Left ventricle myocardium superior (tissue), 1 donor: ENCODE measurements at regions of chr15 and their contacts with region 1.

Region 1: DNA sequence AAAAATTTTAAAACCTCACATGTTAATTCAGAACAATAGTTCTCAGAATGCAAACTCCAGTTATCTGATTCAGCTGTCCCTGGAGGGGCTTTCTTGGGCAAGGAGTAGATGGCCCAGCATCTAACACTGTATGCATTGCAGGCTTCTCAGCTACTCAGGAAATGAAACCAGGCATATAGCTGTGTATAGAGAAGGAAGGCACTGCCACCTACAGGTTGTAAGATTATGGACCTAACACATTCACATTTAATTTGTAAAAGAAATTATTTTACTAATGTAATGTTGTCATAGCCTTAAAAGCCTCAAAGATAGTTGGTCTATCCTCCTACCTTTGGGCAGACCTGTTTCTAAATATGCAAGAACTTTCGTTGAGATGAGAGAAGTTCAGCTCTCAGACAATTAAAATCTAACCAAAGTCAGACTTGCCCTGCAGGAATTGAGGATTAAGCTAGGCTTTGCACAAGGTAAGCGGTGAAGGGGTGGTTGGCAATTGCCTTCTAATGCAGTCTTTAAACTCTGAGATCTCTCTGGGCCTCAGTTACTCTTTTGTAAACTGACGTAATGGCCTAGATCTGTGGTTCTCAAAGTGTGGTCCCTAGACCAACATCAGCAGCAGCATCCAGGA is 132.8 kb upstream of the SLC24A5 start:
- DNase-seq: no peak
- ATAC-seq: peak; percentile 87

Region 2: DNA sequence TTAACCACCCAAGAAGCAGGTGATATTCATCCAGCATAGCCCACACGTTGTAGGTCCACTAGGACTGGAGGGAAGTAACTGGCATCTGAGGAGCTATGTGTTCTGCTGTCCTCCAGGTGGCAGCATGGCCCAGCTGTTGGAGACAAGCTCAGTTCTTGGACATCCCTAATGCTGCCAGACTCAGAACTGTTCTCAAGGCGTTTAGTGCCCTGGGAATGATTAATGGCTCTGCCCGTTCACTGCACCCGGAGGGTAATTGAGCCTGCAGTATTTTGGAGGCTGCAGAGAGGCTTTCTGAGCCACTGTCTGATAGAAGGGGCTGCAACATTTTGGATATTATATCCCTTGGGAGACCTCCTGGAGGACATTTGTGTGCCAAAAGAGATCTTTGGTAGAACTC is 792.0 kb before region 1 on chr15:
- intact Hi-C with region 1: loop called (anchors 5 kb)
- DNase-seq: peak; percentile 76
- ATAC-seq: peak; percentile 95

Region 3: GRCh38 chr15:47473832-47474231 is 514.2 kb before region 1 on chr15:
- intact Hi-C with region 1: loop called (anchors 10 kb)
- DNase-seq: peak; percentile 67
- ATAC-seq: peak; percentile 98

Region 4: GRCh38 chr15:47506329-47507100 is 481.5 kb before region 1 on chr15:
- intact Hi-C with region 1: loop called (anchors 10 kb)
- DNase-seq: no peak
- ATAC-seq: peak; percentile 91

Region 5: GRCh38 chr15:47711654-47712053 is 276.4 kb before region 1 on chr15:
- intact Hi-C with region 1: loop called (anchors 5 kb)
- DNase-seq: no peak
- ATAC-seq: no peak

Region 6: DNA sequence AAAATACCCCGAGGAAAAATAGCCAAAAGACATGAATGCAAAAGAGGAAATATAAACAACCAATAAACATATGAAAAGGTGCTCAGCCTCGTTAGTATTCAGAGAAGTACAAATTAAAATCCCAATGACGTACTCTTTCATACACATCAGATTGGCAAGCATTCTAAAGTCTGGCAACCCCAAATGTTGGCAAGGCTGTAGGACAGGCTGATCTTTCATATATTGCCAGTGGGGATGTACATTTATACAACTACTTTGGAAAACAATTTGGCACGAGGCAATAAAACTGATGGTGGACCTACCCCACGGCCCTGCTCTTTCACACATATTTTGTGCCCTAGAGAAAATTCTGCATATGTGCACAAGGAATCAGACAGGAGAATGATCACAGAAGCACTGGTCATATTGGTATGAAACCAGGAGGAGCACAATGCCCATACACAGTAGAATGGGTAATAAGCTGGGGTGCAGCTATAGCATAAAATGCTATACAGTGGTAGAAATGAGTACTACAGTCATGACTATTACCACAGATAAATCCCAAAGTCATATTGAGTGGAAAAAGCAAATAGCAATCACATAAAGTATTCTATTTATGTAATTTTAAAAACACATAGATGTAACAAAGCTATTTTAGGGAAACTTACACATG is 43.3 kb before region 1 on chr15:
- intact Hi-C with region 1: no loop called
- DNase-seq: no peak
- ATAC-seq: no peak

Region 7: GRCh38 chr15:48395521-48396011 is 407.5 kb after region 1 on chr15:
- intact Hi-C with region 1: no loop called
- DNase-seq: peak; percentile 88
- ATAC-seq: peak; percentile 85